ENCODE measurements at regions of chr7 and their contacts with region 1.

Region 1: GRCh38 chr7:18570890-18571478 is 75.4 kb downstream of the HDAC9 start:
- DNase-seq: peak; percentile 75
- H3K4me3 ChIP-seq: no peak overlapping the region
- H3K27ac ChIP-seq: no peak overlapping the region
- H3K4me1 ChIP-seq: peaks cover 43% of the 10 kb centered on the region
- H3K27me3 ChIP-seq: no peaks in the 10 kb centered on the region
- CTCF ChIP-seq: peak; percentile 76

Region 2: GRCh38 chr7:17706734-17707133 is 864.2 kb before region 1 on chr7:
- CTCF ChIA-PET with region 1: no interaction called
- POLR2A ChIA-PET with region 1: no interaction called
- intact Hi-C with region 1: loop called (anchors 10 kb)
- DNase-seq: peak; percentile 78
- H3K4me3 ChIP-seq: no peak overlapping the region
- H3K27ac ChIP-seq: no peak overlapping the region
- H3K4me1 ChIP-seq: no peaks in the 10 kb centered on the region
- H3K27me3 ChIP-seq: peaks cover 12% of the 10 kb centered on the region
- CTCF ChIP-seq: peak; percentile 77

Region 3: DNA sequence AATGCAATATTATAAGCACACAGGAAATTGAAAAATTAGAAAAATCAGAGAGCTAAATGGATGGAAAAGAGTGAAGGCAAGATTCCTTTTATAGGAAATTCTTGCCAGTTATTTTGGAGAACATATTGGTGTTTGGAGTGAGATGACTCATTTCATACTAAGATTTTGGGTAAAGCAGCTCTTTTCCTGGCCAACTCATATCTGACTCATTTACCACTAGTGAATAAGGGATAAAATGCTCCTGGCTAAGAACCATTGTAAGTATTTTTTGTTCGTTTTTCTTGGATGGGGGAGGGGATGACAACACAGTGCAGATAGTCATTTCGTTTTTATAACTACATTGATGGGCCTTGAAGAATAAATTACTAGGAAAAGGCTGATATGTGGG is 407.1 kb after region 1 on chr7:
- CTCF ChIA-PET with region 1: no interaction called
- POLR2A ChIA-PET with region 1: no interaction called
- intact Hi-C with region 1: loop called (anchors 10 kb)
- DNase-seq: peak; percentile 92
- H3K4me3 ChIP-seq: no peak overlapping the region
- H3K27ac ChIP-seq: peak overlapping the region; percentile 81
- H3K4me1 ChIP-seq: peaks cover 39% of the 10 kb centered on the region
- H3K27me3 ChIP-seq: no peaks in the 10 kb centered on the region
- CTCF ChIP-seq: no peak

Measured in A673 (cell line).